Activated CD4-positive, alpha-beta T cell treated with anti-CD3 and anti-CD28 coated beads for 36 hours (primary cell): ENCODE measurements at regions of chrX and their contacts with region 1.

Region 1: DNA sequence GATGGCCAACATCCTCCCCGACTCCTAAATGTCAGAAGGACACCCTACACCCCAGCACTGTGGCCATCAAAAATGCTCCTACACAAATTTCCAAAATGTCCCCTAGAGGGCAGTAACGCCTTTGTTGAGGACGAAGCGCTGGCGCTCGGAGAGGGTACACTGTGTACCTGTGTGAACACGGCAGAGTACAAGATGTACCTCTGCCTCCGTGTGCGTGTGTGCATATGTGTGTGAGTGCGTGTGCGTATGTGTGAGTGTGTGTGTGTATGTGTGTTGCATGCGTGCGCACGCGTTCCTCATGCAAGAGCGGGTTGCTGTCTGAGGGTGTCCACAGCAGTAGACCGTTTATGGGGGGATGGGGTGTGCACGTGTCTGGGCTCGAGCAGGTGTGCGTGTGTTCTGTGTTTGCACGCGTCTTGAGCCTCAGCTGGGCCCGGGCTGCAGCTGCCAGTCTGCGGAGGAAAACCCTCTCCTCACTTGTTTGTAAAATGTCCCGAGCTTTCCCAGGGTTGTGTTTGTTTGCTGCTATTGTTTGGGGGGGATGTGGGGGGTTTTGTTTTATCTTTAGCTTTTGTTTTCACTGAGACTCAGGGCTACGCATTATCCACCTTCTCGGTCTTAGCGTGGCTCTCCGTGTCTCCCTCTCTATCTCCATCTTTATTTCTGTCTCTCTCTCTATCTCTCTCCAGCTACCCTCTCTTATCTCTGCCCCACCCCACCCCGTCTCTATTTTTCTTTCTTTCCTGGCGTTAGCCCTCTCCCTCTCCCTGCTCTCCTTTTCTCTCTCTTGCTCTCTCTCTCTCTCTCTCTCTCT is 10.4 kb upstream of the TSPYL2 start:
- DNase-seq: peak; percentile 77
- ATAC-seq: peak; percentile 85
- H3K4me3 Mint-ChIP-seq: peak overlapping the region; percentile 87
- H3K27ac Mint-ChIP-seq: peak overlapping the region; percentile 89
- H3K4me1 Mint-ChIP-seq: peaks cover 10% of the 10 kb centered on the region
- H3K27me3 Mint-ChIP-seq: no peaks in the 10 kb centered on the region

Region 2: DNA sequence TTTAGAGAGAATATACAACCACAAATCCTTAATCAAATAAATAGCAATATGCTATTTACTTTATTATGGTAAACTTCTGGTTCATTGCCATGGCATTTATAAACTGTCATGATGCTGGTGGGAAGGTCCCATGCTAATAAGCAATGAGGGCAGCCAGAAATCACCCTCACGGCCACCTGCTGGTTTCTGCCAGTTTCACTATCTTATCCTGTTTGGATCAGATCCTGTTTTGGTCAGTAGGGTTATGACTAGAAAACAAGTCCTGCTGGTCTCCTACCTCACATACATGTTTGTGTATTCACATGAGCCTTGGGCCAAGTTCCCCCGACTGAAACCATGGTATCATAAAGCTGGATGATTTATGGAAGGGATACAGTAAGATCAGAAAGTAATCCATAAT is 232.7 kb before region 1 on chrX:
- CTCF ChIA-PET with region 1: no interaction called
- POLR2A ChIA-PET with region 1: no interaction called
- intact Hi-C with region 1: no loop called
- DNase-seq: no peak
- ATAC-seq: no peak
- H3K4me3 Mint-ChIP-seq: no peak overlapping the region
- H3K27ac Mint-ChIP-seq: no peak overlapping the region
- H3K4me1 Mint-ChIP-seq: no peaks in the 10 kb centered on the region
- H3K27me3 Mint-ChIP-seq: no peaks in the 10 kb centered on the region

Region 3: GRCh38 chrX:53044995-53045394 is 26.8 kb before region 1 on chrX:
- CTCF ChIA-PET with region 1: no interaction called
- POLR2A ChIA-PET with region 1: no interaction called
- intact Hi-C with region 1: no loop called
- DNase-seq: no peak
- ATAC-seq: no peak
- H3K4me3 Mint-ChIP-seq: no peak overlapping the region
- H3K27ac Mint-ChIP-seq: no peak overlapping the region
- H3K4me1 Mint-ChIP-seq: no peaks in the 10 kb centered on the region
- H3K27me3 Mint-ChIP-seq: peaks cover 10% of the 10 kb centered on the region

Region 4: GRCh38 chrX:53081925-53082772 is 10.3 kb after region 1 on chrX and contains the start of gene TSPYL2:
- CTCF ChIA-PET with region 1: no interaction called
- POLR2A ChIA-PET with region 1: interaction called, 3 read pairs
- intact Hi-C with region 1: loop called in 1 of 2 experiments (anchors 1 kb)
- DNase-seq: peak; percentile 96
- ATAC-seq: peak; percentile 91
- H3K4me3 Mint-ChIP-seq: peak within 1 kb of the TSS; percentile 91
- H3K27ac Mint-ChIP-seq: peak within 1 kb of the TSS; percentile 95
- H3K4me1 Mint-ChIP-seq: peaks cover 46% of the 10 kb centered on the region
- H3K27me3 Mint-ChIP-seq: no peaks in the 10 kb centered on the region
- total RNA-seq, gene TSPYL2: 56.7 to 73.3 TPM

Region 5: GRCh38 chrX:53088136-53088974 is 16.5 kb after region 1 on chrX:
- CTCF ChIA-PET with region 1: interaction called, 5 read pairs
- POLR2A ChIA-PET with region 1: no interaction called
- intact Hi-C with region 1: loop called (anchors 1 kb)
- DNase-seq: peak; percentile 89
- ATAC-seq: peak; percentile 77
- H3K4me3 Mint-ChIP-seq: peak overlapping the region; percentile 76
- H3K27ac Mint-ChIP-seq: peak overlapping the region; percentile 87
- H3K4me1 Mint-ChIP-seq: peaks cover 61% of the 10 kb centered on the region
- H3K27me3 Mint-ChIP-seq: no peaks in the 10 kb centered on the region